A673 (cell line): ENCODE measurements at regions of chr4 and their contacts with region 1.

Region 1: GRCh38 chr4:64200001-64200555 is 209.2 kb downstream of the TECRL start:
- DNase-seq: no peak
- H3K4me3 ChIP-seq: no peak overlapping the region
- H3K27ac ChIP-seq: no peak overlapping the region
- H3K4me1 ChIP-seq: no peaks in the 10 kb centered on the region
- H3K27me3 ChIP-seq: no peaks in the 10 kb centered on the region
- CTCF ChIP-seq: no peak

Region 2: GRCh38 chr4:64158648-64159326 is 41.3 kb before region 1 on chr4:
- CTCF ChIA-PET with region 1: interaction called, 12 read pairs
- POLR2A ChIA-PET with region 1: no interaction called
- intact Hi-C with region 1: no loop called
- DNase-seq: peak; percentile 50
- H3K4me3 ChIP-seq: peak overlapping the region; percentile 19
- H3K27ac ChIP-seq: no peak overlapping the region
- H3K4me1 ChIP-seq: no peaks in the 10 kb centered on the region
- H3K27me3 ChIP-seq: no peaks in the 10 kb centered on the region
- CTCF ChIP-seq: peak; percentile 65

Region 3: GRCh38 chr4:64251781-64252180 is 51.7 kb after region 1 on chr4:
- CTCF ChIA-PET with region 1: no interaction called
- POLR2A ChIA-PET with region 1: no interaction called
- intact Hi-C with region 1: no loop called
- DNase-seq: no peak
- H3K4me3 ChIP-seq: no peak overlapping the region
- H3K27ac ChIP-seq: no peak overlapping the region
- H3K4me1 ChIP-seq: no peaks in the 10 kb centered on the region
- H3K27me3 ChIP-seq: no peaks in the 10 kb centered on the region
- CTCF ChIP-seq: no peak